Esophagus squamous epithelium (tissue), 5 donors: ENCODE measurements at regions of chr1 and their contacts with region 1.

Region 1: GRCh38 chr1:39720094-39720999 is 18.3 kb upstream of the PPIE start:
- DNase-seq: no peak
- H3K4me3 ChIP-seq: no peak overlapping the region
- H3K27ac ChIP-seq: no peak overlapping the region
- H3K4me1 ChIP-seq: no peaks in the 10 kb centered on the region
- H3K27me3 ChIP-seq: peaks cover 0 to 58% (median 2%) of the 10 kb centered on the region in 4 donors
- CTCF ChIP-seq: peak in 5 of 6 experiments; percentile 56 to 77 (median 73)
- POLR2A ChIP-seq: no peak

Region 2: DNA sequence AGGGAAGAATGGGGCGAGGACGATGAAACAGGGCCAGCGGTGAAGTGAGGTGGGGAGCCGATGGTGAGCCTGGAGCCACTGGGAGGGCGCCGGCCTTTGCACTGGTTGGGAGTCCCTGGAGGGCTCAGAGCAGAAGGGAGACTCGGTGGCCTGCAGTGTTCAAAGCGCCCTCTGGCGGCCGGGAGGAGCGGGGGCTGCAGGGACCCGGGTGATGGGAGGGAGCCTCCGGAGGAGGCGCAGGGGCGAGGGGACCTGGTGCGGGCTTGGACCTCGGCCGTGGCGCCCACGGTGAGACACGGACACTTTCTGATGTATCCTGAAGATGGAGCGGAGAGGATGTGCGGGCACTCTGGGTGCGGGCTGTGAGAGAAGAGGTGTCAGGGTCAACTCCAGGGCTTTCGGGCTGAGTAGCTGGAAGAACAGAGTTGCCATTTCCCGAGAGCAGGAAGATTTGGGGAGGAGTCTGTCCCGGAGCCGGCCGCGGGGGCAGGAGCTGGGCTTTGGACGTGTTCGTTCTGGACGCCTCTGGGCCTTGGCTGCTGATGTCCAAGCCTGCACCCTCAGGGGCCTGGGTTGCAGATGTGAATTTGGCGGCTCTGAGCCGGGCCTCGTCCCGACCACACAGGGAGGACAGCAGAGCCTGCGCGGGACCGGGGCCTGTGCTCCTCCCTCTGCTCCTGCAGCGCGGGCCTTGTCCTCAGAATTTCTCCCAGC is 110.6 kb before region 1 on chr1:
- intact Hi-C with region 1: loop called (anchors 10 kb)
- DNase-seq: no peak
- H3K4me3 ChIP-seq: peak overlapping the region in 1 of 4 donors; percentile 43
- H3K27ac ChIP-seq: peak overlapping the region in 2 of 4 donors; percentile 6 to 28
- H3K4me1 ChIP-seq: peaks cover 0 to 22% (median 4%) of the 10 kb centered on the region in 3 donors
- H3K27me3 ChIP-seq: peaks cover 0 to 4% (median 0%) of the 10 kb centered on the region in 4 donors
- CTCF ChIP-seq: peak in 5 of 6 experiments; percentile 54 to 78 (median 63)
- POLR2A ChIP-seq: no peak

Region 3: DNA sequence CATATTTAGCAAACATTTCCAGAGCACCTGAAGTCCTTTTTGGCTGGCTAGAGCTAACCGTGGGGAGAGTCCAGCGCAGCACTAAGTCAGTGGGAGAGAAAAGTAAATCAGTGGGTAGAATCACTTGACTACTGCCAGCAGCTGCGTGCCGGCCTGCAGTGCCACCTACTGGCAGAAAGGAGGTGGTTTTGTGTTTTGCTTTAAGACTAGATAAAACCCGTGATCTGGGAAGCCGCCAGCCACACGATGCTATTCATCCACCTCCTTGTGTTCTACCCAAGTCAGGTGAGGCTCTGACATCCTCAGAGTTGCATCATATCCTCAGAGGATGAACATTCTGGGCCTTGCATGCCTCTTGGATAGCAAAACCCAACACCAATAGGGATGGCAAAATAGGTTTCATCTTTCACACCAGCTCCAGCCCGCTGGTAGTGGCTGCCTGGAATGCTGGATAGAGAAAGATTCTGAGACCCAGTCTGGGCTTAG is 66.8 kb before region 1 on chr1:
- intact Hi-C with region 1: loop called (anchors 5 kb)
- DNase-seq: no peak
- H3K4me3 ChIP-seq: no peak overlapping the region
- H3K27ac ChIP-seq: peak overlapping the region in 1 of 4 donors; percentile 19
- H3K4me1 ChIP-seq: peaks cover 0 to 17% (median 0%) of the 10 kb centered on the region in 3 donors
- H3K27me3 ChIP-seq: peaks cover 0 to 12% (median 0%) of the 10 kb centered on the region in 4 donors
- CTCF ChIP-seq: peak; percentile 82 to 93 (median 84)
- POLR2A ChIP-seq: no peak

Region 4: GRCh38 chr1:39825432-39825951 is 105.1 kb after region 1 on chr1:
- intact Hi-C with region 1: no loop called
- DNase-seq: no peak
- H3K4me3 ChIP-seq: no peak overlapping the region
- H3K27ac ChIP-seq: no peak overlapping the region
- H3K4me1 ChIP-seq: peaks cover 0 to 40% (median 0%) of the 10 kb centered on the region in 3 donors
- H3K27me3 ChIP-seq: no peaks in the 10 kb centered on the region
- CTCF ChIP-seq: no peak
- POLR2A ChIP-seq: no peak